A549 (cell line): ENCODE measurements at regions of chr17 and their contacts with region 1.

Region 1: DNA sequence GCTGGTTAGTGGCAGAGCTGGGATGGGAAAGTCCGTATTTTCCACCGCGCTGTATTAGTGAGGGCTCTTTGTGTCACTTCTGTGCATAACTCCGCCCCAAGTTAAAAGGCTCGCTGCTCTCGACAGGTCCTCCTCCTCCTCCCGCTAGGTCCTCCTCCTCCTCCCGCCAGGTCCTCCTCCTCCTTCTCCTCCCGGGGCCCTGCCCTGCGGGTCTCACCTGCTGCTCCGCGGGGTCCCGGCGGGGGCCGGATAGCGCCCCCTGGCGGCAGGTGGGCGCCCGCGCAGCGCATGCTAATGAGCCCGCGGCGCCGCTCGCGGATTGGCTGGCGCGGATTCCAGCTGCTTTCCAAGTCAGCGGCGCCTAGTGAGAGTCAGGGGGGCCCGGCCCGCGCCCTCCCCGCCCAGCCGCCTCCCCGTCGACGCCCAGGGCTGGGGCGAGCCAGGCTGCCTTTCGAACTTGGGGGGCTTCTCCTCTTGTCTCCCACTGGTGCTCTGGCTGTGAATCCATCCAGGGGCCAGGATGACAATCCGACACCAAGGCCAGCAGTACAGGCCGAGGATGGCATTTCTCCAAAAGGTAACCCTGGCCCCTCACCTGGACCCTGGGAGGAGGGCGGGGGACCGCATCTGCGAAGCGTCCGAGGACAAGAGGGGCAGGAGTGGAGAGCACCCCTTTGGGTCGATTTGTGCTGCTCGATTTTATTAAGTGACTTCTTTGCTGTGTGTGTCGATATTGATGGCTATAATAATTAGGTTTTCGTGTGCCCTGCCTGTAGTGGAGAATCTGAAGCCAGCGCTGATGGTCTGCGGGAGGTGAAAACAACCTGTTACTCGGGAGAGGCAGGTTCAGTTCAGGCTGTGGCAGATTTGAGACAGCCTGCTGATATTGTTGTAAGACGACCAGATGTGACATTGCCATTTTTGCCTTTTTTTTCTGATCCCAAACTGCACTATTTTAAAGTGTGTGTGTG is at the start of gene RGS9:
- DNase-seq: peak; percentile 77 to 87
- ATAC-seq: peak; percentile 93 to 97
- H3K4me3 ChIP-seq: peak within 1 kb of the TSS; percentile 39
- H3K27ac ChIP-seq: peak within 1 kb of the TSS; percentile 40 to 61
- H3K4me1 ChIP-seq: no peaks in the 10 kb centered on the region
- CTCF ChIP-seq: peak; percentile 99
- EP300 ChIP-seq: no peak
- POLR2A ChIP-seq: no peak
- RAD21 ChIP-seq: peak; percentile 65 to 84
- polyA plus RNA-seq, gene RGS9: 11.2 and 14.3 TPM in 2 replicates

Region 2: GRCh38 chr17:64920026-64920418 is 217.3 kb before region 1 on chr17:
- CTCF ChIA-PET with region 1: interaction called, 12 read pairs
- POLR2A ChIA-PET with region 1: interaction called, 4 read pairs
- DNase-seq: peak in 1 of 2 experiments; percentile 35
- ATAC-seq: peak in 1 of 2 experiments; percentile 49; a peak in 3 of 6 replicates
- H3K4me3 ChIP-seq: peak overlapping the region; percentile 52
- H3K27ac ChIP-seq: peak overlapping the region; percentile 86 to 91
- H3K4me1 ChIP-seq: peaks cover 8% of the 10 kb centered on the region; the same call in 1 of the 3 replicates
- CTCF ChIP-seq: no peak
- EP300 ChIP-seq: no peak
- POLR2A ChIP-seq: no peak
- RAD21 ChIP-seq: no peak

Region 3: DNA sequence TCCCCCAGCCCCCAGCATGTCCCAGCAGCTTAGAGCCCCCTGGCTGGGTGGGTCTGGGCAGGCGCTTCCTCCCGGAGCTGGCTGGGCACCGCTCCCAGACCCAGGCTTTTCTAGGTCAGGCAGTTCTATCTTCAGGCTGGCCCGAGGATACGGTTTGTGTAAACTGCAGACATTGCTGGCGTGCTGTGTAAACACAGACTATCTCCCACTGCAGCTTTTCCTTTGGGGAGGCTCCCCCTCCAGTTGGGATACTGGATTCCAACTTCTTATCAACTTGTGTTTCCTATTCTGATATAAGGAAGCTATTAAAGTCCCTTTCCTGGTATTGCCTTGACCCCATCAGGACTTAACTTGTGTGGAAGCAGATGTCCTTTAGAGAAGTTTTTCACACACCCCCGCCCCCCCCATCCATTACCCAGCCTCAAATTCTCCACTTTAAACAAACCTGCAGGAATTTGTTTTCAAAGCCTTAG is 62.5 kb before region 1 on chr17:
- CTCF ChIA-PET with region 1: interaction called, 16 read pairs
- POLR2A ChIA-PET with region 1: no interaction called
- DNase-seq: peak; percentile 49 to 73
- ATAC-seq: peak; percentile 67 to 80
- H3K4me3 ChIP-seq: no peak overlapping the region
- H3K27ac ChIP-seq: peak overlapping the region; percentile 65 to 88
- H3K4me1 ChIP-seq: peaks cover 59% of the 10 kb centered on the region
- CTCF ChIP-seq: no peak
- EP300 ChIP-seq: no peak
- POLR2A ChIP-seq: no peak
- RAD21 ChIP-seq: peak; percentile 40 to 44; a peak in 4 of 5 replicates

Region 4: DNA sequence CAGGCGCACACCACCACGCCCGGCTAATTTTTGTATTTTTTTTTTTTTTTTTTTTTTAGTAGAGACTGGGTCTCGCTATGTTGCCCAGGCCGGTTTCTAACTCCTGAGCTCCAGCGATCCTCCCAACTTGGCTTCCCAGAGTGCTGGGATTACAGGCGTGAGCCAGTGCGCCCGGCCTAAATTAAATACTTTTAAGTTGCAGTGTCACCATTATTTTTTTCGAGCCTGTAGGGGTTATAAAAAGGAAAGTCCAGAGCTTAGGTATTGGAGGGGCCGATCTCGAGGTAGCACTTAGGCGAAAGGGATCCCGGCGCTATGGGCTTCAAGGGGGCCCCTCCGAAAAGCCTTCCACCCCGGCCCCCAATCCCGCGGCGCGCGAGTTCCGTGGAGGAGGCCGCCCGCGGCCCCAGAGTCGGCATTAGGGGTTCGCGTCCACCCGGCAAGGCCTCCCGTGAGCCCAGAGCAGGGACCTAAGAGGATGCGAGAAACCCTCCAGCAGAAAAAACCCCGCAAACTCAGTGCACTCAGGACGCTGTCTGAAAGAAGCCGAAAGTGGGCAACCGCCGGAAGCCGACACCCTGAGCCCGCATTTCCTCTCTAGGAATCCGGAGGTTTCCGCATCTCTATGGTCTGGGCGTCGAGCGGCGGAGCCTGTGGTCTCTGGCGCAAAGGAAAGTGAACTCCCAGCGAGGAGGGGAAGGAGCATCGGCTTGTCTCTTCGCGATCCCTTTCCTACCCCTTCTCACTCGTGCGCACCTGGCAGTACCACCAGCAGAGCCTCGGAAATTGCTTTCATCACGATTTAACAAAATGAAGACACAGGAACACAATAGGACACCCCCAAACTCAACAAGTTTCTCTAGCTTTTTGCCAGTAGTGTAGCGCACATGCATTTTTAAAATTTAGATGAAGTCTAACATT is 14.2 kb before region 1 on chr17:
- CTCF ChIA-PET with region 1: interaction called, 30 read pairs
- POLR2A ChIA-PET with region 1: interaction called, 4 read pairs
- DNase-seq: peak; percentile 94 to 98
- ATAC-seq: peak; percentile 93 to 95
- H3K4me3 ChIP-seq: peak overlapping the region; percentile 53
- H3K27ac ChIP-seq: peak overlapping the region; percentile 77 to 93
- H3K4me1 ChIP-seq: peaks cover 19% of the 10 kb centered on the region
- CTCF ChIP-seq: no peak
- EP300 ChIP-seq: no peak
- POLR2A ChIP-seq: peak; percentile 86
- RAD21 ChIP-seq: peak in 1 of 2 experiments; percentile 44; a peak in 2 of 5 replicates

Region 5: GRCh38 chr17:65163990-65164495 is 26.7 kb after region 1 on chr17:
- CTCF ChIA-PET with region 1: interaction called, 158 read pairs
- POLR2A ChIA-PET with region 1: no interaction called
- DNase-seq: peak; percentile 57 to 70
- ATAC-seq: peak; percentile 90 to 93
- H3K4me3 ChIP-seq: no peak overlapping the region
- H3K27ac ChIP-seq: 0 out of 6 replicates have a peak overlapping the region, but pooled peaks of 1 of the 2 experiments have one; percentile 22
- H3K4me1 ChIP-seq: peaks cover 10% of the 10 kb centered on the region; the same call in 2 of the 3 replicates
- CTCF ChIP-seq: no peak
- EP300 ChIP-seq: no peak
- POLR2A ChIP-seq: no peak
- RAD21 ChIP-seq: no peak

Region 6: DNA sequence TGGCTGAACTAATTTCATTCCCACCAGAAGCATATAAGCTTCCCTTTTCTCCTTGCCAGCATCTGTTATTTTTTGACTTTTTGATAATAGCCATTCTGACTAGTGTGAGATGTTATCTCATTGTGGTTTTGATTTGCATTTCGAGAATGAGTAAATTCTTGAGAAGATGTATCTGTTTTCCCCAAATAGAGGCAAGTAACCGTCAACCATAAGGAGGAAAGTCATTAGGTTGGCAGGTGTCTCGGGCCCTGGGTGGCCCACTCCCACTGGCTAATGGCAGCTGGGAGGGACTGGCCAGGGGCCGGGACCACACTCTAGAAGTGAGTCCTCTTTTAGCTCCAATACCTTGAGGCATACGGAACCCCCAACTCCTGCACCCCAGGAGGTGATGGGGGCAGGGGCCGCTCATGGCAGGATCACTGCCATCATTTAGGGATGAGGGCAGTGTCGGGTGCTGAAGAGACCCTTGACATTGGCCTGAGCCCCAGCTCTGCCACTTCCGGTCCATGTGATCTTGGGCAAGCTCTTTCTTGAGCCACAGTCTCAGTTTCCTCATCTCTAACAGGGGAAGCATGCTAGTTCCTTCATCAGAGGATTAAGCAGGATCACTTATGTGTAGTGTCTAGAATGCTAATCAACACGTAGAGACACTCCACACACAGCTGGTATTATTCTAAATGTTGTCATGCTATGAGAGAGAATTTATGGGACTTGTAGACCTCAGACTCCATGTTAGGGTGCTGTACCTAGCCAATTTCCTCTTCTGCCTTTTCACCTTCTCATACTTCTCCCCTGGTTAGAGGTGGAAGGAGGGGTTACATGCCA is 44.1 kb after region 1 on chr17:
- CTCF ChIA-PET with region 1: interaction called, 25 read pairs
- POLR2A ChIA-PET with region 1: no interaction called
- DNase-seq: no peak
- ATAC-seq: no peak
- H3K4me3 ChIP-seq: no peak overlapping the region
- H3K27ac ChIP-seq: no peak overlapping the region
- H3K4me1 ChIP-seq: peaks cover 18% of the 10 kb centered on the region
- CTCF ChIP-seq: no peak
- EP300 ChIP-seq: no peak
- POLR2A ChIP-seq: no peak
- RAD21 ChIP-seq: no peak

Region 7: GRCh38 chr17:65888649-65889048 is 751.3 kb after region 1 on chr17:
- CTCF ChIA-PET with region 1: no interaction called
- POLR2A ChIA-PET with region 1: no interaction called
- DNase-seq: no peak
- ATAC-seq: no peak
- H3K4me3 ChIP-seq: no peak overlapping the region
- H3K27ac ChIP-seq: no peak overlapping the region
- H3K4me1 ChIP-seq: no peaks in the 10 kb centered on the region
- CTCF ChIP-seq: no peak
- EP300 ChIP-seq: no peak
- POLR2A ChIP-seq: no peak
- RAD21 ChIP-seq: no peak